Activated CD4-positive, alpha-beta memory T cell treated with anti-CD3 and anti-CD28 coated beads for 36 hours (primary cell): ENCODE measurements at regions of chr9 and their contacts with region 1.

Region 1: GRCh38 chr9:79571309-79572031 is at the start of gene TLE4:
- DNase-seq: peak; percentile 100
- H3K4me3 Mint-ChIP-seq: peak within 1 kb of the TSS; percentile 72
- H3K27ac Mint-ChIP-seq: peak within 1 kb of the TSS; percentile 56
- H3K4me1 Mint-ChIP-seq: peaks cover 29% of the 10 kb centered on the region
- H3K27me3 Mint-ChIP-seq: peaks cover 6% of the 10 kb centered on the region
- total RNA-seq, gene TLE4: 14.3 to 15.3 TPM

Region 2: GRCh38 chr9:79471580-79472543 is 99.6 kb before region 1 on chr9:
- CTCF ChIA-PET with region 1: no interaction called
- POLR2A ChIA-PET with region 1: no interaction called
- intact Hi-C with region 1: loop called (anchors 5 kb)
- DNase-seq: peak; percentile 12
- H3K4me3 Mint-ChIP-seq: no peak overlapping the region
- H3K27ac Mint-ChIP-seq: no peak overlapping the region
- H3K4me1 Mint-ChIP-seq: no peaks in the 10 kb centered on the region
- H3K27me3 Mint-ChIP-seq: no peaks in the 10 kb centered on the region

Region 3: DNA sequence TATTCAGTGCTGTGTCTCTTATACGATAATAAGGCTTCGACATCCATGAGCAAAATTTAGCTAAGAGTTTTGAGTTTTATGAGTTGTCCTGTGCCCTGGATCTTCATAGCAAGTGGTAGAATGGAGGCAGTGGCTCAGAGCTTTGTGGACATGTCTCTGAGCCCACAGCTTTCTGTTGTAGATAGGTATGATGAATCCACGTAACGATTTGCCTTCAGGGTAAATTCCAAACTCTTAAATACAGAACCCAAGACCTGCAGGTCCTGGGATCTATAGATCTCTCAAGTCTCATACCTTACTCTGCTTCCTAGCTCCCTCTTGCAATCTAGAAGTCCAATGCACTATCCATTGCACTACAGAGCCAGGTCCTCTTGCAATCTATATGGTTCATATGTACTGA is 59.2 kb before region 1 on chr9:
- CTCF ChIA-PET with region 1: no interaction called
- POLR2A ChIA-PET with region 1: no interaction called
- intact Hi-C with region 1: no loop called
- DNase-seq: no peak
- H3K4me3 Mint-ChIP-seq: no peak overlapping the region
- H3K27ac Mint-ChIP-seq: no peak overlapping the region
- H3K4me1 Mint-ChIP-seq: no peaks in the 10 kb centered on the region
- H3K27me3 Mint-ChIP-seq: no peaks in the 10 kb centered on the region

Region 4: DNA sequence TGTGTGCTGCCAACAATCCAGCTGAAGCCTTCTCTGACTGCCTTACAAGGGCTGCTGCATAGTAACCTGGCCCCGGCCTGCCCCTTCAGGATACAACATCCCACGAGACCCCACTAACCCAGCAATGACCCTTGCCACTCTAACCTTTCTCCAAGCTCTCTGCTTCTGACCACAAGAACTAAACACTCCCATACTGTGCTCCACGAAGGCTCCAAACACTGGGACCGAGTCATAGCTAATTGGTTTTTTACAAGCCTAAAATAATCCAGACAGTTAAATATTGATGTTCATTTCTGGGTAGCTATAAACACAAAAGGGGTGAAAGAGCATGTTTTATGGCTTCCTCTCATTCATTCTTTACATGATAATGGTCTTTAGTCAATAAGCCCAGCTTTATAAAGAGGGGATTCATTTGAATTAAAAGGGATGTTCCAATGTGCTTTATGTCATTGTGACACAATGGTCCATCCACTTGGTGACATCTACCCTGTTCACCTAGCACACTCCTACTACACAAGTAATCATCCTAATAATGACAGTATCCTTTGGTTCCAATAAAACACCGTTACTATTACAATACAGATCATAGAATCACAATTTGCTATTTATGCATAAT is 15.9 kb before region 1 on chr9:
- CTCF ChIA-PET with region 1: no interaction called
- POLR2A ChIA-PET with region 1: no interaction called
- intact Hi-C with region 1: no loop called
- DNase-seq: no peak
- H3K4me3 Mint-ChIP-seq: no peak overlapping the region
- H3K27ac Mint-ChIP-seq: no peak overlapping the region
- H3K4me1 Mint-ChIP-seq: peaks cover 3% of the 10 kb centered on the region
- H3K27me3 Mint-ChIP-seq: no peaks in the 10 kb centered on the region

Region 5: DNA sequence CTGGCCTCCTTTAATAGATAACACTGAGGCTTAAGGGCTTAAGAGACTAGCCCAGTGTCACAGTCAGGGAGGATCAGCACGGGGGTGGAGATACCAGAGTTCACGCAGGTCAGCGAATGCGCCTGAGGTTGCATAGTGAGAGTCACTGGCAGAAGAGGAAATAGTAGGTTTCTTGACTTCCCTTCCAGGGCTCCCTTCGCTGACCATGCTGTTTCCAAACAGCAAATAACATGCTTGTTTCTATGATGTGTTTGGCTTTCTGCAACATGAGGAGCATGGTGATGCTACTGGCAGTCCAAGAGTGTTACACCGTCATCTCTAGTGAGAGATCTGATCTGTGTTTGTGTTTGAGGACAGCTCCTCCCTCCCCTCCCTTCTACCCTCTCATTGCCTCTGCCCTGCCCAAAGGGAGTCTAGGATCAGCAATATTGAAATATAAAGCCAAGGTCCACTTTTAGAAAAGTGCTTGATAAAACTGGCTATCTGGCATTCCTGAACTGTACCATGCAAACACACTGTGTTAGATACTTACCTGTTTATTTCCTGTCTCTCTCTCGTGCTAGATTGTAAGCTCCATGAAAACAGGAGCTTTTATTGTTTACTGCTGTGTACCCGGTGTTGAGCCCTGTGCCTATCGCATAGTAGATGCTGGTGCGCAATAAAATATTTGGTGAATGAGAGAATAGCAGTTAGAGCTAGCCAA is 12.6 kb after region 1 on chr9:
- CTCF ChIA-PET with region 1: interaction called, 4 read pairs
- POLR2A ChIA-PET with region 1: interaction called, 25 read pairs
- intact Hi-C with region 1: loop called (anchors 1 kb)
- DNase-seq: peak; percentile 73
- H3K4me3 Mint-ChIP-seq: peak overlapping the region; percentile 27
- H3K27ac Mint-ChIP-seq: peak overlapping the region; percentile 39
- H3K4me1 Mint-ChIP-seq: peaks cover 61% of the 10 kb centered on the region
- H3K27me3 Mint-ChIP-seq: no peaks in the 10 kb centered on the region

Region 6: GRCh38 chr9:79698967-79699366 is 127.5 kb after region 1 on chr9:
- CTCF ChIA-PET with region 1: no interaction called
- POLR2A ChIA-PET with region 1: no interaction called
- intact Hi-C with region 1: loop called (anchors 2 kb)
- DNase-seq: no peak
- H3K4me3 Mint-ChIP-seq: no peak overlapping the region
- H3K27ac Mint-ChIP-seq: no peak overlapping the region
- H3K4me1 Mint-ChIP-seq: peaks cover 43% of the 10 kb centered on the region
- H3K27me3 Mint-ChIP-seq: no peaks in the 10 kb centered on the region